ENCODE measurements at regions of chr20 and their contacts with region 1.

Region 1: DNA sequence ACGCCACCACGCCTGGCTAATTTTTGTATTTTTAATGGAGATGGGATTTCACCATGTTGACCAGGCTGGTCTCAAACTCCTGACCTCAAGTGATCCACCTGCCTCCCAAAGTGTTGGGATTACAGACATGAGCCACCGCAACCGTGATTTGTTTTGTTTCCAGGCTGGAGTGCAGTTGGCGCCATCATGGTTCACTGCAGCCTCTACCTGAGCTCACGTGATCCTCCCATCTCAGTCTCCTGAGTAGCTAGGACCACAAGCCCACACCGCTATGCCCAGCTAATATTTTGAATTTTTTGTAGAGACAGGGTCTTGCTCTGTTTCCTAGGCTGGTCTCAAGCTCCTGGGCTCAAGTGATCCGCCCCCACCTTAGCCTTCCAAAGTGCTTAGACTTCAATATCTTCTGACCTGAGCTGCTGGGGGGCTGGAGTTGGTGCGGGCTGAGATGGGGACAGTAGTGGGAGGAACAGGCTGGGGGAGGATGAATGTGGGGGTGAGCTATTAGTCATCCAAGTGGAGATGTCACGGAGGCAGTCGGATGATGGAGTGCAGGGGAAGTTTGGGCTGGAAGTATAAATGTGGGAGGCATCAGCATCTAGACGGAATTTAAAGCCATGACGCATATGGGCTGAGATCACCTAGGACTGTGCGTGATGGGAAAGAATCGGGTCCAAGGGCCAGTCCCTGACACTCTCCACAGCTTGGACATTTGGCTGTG is 23.1 kb upstream of the ZMYND8 start:
- DNase-seq: peak; percentile 63
- H3K4me3 ChIP-seq: no peak overlapping the region
- H3K27ac ChIP-seq: peak overlapping the region; percentile 52
- H3K27me3 ChIP-seq: no peaks in the 10 kb centered on the region
- CTCF ChIP-seq: no peak

Region 2: DNA sequence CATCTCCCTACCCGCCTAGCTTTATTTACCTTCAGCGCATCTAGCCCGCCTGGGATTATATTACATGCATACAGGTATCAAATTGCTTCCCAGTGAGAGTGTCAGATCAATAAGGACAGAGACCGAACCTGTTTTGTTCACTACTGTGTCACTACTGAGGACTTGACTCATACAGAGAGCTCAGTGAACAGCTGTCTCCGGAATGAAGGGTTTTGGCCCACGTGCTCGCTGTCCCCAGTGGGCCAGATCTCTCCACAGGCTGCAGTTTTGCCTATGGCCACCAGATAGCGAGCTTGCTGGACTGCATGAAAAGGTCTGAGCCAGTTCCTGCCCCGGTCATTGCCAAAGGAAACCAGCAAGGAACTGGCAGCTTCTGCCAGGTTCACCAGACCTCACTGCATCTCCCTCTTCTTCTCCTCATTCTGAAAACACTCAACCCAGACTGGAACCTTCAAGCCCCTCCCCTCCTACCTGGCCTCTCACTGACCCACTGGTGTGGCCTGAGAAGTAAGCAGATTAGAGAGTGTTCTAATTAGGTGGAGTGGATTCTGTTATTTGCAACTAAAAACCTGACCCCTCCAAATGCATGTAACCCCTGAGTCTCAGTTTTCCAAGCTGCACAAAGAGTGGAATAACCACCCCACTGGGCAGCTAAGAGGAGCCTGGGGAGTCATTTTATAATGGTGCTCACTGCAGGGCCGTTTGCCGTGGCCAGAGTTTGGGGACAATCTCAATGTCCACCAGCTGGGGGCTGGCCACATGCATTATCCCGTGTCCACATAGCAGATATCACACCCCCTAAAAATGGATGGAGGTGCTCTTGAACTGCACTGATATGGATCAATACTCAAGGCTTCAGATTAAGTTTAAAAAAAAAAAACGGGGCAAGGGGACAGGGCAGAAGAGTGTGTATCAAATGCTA is 173.8 kb before region 1 on chr20:
- CTCF ChIA-PET with region 1: interaction called, 69 read pairs
- POLR2A ChIA-PET with region 1: interaction called, 3 read pairs
- DNase-seq: peak; percentile 59
- H3K4me3 ChIP-seq: no peak overlapping the region
- H3K27ac ChIP-seq: peak overlapping the region; percentile 21
- H3K27me3 ChIP-seq: no peaks in the 10 kb centered on the region
- CTCF ChIP-seq: peak; percentile 79

Region 3: DNA sequence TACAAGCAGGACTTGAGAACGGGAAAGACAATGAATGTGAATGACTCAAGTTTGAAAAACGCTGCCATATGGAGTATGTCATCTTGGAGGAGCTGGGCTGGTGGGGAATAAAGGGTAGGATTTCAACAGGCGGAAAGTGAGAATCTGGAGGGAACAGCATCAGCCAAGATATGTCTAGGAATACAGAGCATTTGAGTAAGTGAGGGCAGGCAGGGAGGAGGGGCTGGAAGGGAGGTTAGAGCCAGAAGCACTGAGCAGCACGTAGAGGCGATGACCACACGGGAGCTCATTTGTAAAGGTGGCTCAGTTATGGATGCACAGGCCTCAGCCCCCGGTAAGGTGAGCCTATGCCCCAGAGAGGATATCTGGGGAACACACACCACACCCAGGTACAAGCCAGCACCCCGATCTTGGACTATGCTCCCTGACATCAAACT is 138.2 kb before region 1 on chr20:
- CTCF ChIA-PET with region 1: interaction called, 16 read pairs
- POLR2A ChIA-PET with region 1: no interaction called
- DNase-seq: peak; percentile 97
- H3K4me3 ChIP-seq: no peak overlapping the region
- H3K27ac ChIP-seq: peak overlapping the region; percentile 84
- H3K27me3 ChIP-seq: no peaks in the 10 kb centered on the region
- CTCF ChIP-seq: no peak

Region 4: DNA sequence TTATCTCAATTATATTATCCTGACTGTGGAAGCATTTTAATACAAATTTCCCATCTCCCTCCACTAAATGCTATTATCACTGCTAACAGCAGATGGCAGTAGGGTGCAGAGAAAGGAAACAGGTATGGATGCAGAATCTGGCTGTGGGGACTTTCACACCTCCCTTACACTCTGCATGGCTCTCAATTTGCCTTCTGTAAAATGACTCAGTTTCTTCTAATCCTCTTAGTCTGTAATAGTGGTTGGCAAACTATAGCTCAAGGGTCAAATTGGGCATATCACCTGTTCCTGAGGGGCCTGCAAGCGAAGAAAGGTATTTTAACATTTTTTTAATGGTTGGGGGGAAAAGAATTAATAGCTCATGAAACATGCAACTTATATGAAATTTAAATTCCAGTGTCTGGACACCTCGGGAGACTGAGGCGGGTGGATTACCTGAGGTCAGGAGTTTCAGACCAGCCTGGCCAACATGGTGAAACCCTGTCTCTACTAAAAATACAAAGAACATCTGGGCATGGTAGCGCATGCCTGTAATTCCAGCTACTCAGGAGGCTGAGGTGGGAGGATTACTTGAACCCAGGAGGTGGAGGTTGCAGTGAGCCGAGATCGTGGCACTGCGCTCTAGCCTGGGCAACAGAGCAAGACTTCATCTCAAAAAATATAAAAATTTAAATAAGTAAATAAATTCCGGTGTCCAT is 106.5 kb before region 1 on chr20:
- CTCF ChIA-PET with region 1: interaction called, 561 read pairs
- POLR2A ChIA-PET with region 1: interaction called, 12 read pairs
- DNase-seq: peak; percentile 20
- H3K4me3 ChIP-seq: no peak overlapping the region
- H3K27ac ChIP-seq: peak overlapping the region; percentile 42
- H3K27me3 ChIP-seq: no peaks in the 10 kb centered on the region
- CTCF ChIP-seq: peak; percentile 87

Region 5: DNA sequence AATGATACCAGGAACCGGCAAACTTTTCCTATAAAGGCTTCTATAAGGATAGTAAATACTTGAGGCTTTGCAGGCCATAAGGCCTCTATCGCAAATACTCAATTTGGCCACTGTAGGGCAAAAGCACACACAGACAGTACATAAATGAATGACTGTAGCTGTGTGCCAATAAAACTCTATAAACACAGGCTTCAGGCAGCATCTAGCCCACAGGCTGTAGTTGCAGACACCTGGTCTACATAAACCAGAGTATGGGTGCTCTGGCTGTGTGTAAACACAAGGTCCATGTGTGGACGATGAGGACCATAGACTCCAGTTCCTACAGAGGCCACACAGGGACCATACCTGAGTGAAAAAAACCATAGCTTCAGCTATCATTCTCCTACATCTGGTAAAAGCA is 75.3 kb before region 1 on chr20:
- CTCF ChIA-PET with region 1: interaction called, 42 read pairs
- POLR2A ChIA-PET with region 1: interaction called, 3 read pairs
- DNase-seq: no peak
- H3K4me3 ChIP-seq: no peak overlapping the region
- H3K27ac ChIP-seq: peak overlapping the region; percentile 52
- H3K27me3 ChIP-seq: no peaks in the 10 kb centered on the region
- CTCF ChIP-seq: peak; percentile 43

Region 6: DNA sequence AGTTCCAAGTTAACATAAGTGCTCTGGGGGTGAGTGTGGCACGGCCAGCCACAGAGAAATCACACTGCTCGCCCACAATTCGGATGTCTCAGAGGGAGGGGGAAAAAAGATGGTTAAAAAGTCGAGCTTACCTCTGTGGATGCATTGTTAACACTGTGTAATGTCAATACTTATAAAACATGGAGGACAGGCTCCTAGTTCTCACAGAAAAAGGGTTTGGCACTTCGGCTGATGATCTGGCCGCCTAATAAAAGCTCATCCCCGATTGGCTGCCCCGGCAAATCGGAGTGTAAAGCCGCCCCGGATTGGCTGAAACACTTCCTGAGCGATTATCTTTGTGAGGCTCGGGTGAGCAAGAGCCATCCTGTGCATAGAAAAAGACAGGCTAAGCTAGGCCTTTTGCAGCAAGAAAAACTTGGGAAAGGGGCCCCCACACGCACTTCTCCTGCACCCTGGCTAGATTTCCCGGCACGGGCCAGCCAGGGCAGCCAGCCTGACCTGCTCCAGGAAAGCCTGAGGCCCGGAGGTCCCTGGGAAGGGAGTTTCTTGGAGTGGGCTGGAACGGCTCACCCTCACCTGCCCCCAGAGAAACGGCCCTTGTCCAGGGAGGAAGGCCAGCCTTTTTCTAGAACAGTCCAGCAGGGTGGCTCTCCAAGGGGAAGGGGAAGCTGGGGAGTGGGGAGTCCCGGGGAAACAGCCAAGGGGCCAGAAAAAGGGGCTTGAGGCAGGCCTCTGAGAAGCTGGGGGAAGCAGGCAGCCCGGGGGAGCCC is 22.9 kb before region 1 on chr20 and contains the start of gene ZMYND8:
- CTCF ChIA-PET with region 1: interaction called, 68 read pairs
- POLR2A ChIA-PET with region 1: interaction called, 5 read pairs
- DNase-seq: peak; percentile 81
- H3K4me3 ChIP-seq: peak within 1 kb of the TSS; percentile 52
- H3K27ac ChIP-seq: peak within 1 kb of the TSS; percentile 99
- H3K27me3 ChIP-seq: no peaks in the 10 kb centered on the region
- CTCF ChIP-seq: no peak
- polyA plus RNA-seq, gene ZMYND8: 20.3 and 23.1 TPM in 2 replicates

Region 7: DNA sequence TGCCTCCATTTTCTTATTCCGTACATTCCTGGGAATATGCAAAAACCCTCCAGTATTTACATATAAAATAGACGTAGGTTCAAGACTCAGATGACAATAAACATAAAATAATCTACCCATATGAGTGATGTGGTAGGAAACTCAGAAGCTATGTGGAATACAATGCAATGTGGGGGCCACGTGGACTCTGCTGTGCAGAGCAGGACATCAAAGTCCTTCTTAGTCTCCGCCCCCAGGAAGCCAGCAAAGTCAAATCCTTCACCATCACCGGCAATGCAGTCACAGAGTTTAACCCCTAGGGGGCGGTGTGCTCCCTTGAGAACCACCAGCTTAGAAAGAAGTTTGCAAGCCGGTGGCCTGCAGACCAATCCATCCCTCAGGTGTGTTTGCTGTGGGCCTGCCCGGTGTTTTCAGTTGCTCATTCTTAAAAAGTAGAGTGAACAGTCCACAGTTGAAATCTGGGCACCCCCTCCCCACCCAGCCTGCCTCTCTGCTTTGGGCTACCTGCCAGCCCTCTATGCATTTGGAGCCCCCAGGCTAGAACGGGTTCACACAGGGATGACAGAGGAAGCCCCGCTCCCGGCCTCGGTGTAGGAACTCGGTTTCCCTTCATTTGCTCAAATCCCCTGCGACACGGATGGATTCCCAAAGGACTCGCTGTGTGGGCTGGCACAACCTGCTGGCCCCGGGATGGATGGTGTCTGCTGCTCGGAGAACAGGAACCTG is 345.8 kb after region 1 on chr20:
- CTCF ChIA-PET with region 1: no interaction called
- POLR2A ChIA-PET with region 1: no interaction called
- DNase-seq: peak; percentile 29
- H3K4me3 ChIP-seq: no peak overlapping the region
- H3K27ac ChIP-seq: no peak overlapping the region
- H3K27me3 ChIP-seq: peaks cover 12% of the 10 kb centered on the region
- CTCF ChIP-seq: peak; percentile 80